ENCODE measurements at regions of chr17 and their contacts with region 1.

Region 1: DNA sequence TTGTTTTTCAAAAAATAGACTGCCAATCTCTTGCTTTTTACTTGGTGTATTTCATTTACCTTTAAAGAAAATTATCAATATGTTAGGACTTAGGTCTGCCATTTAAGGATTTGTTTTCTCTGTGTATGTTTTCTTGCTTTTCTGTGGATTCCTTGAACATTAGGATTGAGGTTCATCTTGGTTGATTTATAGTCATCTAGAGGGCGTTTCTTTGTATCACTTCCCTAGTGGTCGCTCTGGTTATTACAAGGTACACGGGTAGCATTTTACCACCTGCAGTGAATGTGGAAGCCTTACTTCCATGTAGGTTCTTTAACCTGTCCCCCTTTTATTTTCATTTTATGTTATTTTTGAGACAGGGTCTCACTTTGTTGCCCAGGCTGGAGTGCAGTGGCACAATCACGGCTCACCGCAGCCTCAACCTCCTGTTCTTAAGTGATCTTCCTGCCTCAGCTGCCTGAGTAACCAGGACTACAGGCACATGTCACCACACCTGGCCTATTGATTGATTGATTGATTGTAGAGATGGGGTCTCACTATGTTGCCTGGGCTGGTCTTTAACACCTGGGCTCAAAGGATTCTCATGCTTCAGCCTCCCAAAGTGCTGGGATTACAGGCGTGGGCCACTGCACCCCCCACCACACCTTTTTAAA is 35.2 kb upstream of the CBX4 start:
- DNase-seq: peak in 1 of 2 experiments; percentile 59
- H3K4me3 ChIP-seq: no peak overlapping the region
- H3K4me3 Mint-ChIP-seq: no peak overlapping the region
- H3K27ac Mint-ChIP-seq: no peak overlapping the region
- H3K4me1 ChIP-seq: no peaks in the 10 kb centered on the region
- H3K4me1 Mint-ChIP-seq: no peaks in the 10 kb centered on the region
- H3K27me3 ChIP-seq: no peaks in the 10 kb centered on the region
- H3K27me3 Mint-ChIP-seq: no peaks in the 10 kb centered on the region
- CTCF ChIP-seq: peak; percentile 47 to 57

Region 2: DNA sequence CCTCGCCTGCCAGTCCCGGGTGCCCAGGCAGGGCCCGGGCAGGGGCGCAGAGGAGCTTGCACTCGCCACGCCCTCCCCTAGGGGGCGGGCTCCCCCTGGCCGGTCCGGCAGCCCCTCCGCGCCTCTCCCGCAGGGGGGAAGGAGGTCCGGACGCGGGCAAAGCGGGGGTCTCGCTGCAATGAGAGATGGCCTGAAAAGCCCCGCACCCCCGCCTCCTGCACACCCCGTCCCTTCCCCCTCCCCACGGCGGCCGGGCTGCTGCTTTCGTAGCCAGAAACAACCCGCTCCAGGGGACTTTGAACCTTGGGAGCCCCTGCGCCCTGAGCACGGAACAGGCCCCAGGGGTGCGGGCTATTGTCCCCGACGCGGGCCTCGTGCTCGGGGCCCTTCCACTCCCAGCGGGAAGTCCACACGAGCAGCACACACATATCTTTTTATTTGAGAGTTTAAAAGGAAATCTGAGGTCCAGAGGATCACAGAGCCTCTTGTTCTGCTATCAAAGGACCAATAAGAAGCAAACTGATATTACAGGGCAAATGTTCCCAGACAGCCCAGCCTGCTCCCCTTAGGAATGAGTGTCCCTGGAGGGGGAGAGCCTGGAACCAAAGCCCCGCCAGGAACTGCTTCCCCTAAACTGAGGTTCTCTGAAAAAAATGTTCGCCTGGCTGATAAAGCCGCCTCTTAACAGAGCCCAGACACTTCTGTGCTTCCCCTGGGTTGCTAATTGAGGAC is 29.4 kb before region 1 on chr17:
- CTCF ChIA-PET with region 1: interaction called, 3 read pairs
- POLR2A ChIA-PET with region 1: no interaction called
- intact Hi-C with region 1: loop called (anchors 2 kb)
- DNase-seq: peak; percentile 82 to 87
- H3K4me3 ChIP-seq: peak overlapping the region; percentile 68
- H3K4me3 Mint-ChIP-seq: peak overlapping the region; percentile 80
- H3K27ac Mint-ChIP-seq: peak overlapping the region; percentile 92
- H3K4me1 ChIP-seq: peaks cover 41% of the 10 kb centered on the region
- H3K4me1 Mint-ChIP-seq: peaks cover 12% of the 10 kb centered on the region
- H3K27me3 ChIP-seq: no peaks in the 10 kb centered on the region
- H3K27me3 Mint-ChIP-seq: no peaks in the 10 kb centered on the region
- CTCF ChIP-seq: peak; percentile 89

Region 3: GRCh38 chr17:79905832-79906231 is 31.4 kb after region 1 on chr17:
- CTCF ChIA-PET with region 1: interaction called, 14 read pairs
- POLR2A ChIA-PET with region 1: no interaction called
- intact Hi-C with region 1: no loop called
- DNase-seq: peak; percentile 83 to 86
- H3K4me3 ChIP-seq: no peak overlapping the region
- H3K4me3 Mint-ChIP-seq: no peak overlapping the region
- H3K27ac Mint-ChIP-seq: no peak overlapping the region
- H3K4me1 ChIP-seq: peaks cover 13% of the 10 kb centered on the region; the same call in 1 of the 2 replicates
- H3K4me1 Mint-ChIP-seq: peaks cover 19% of the 10 kb centered on the region
- H3K27me3 ChIP-seq: no peaks in the 10 kb centered on the region
- H3K27me3 Mint-ChIP-seq: no peaks in the 10 kb centered on the region
- CTCF ChIP-seq: peak; percentile 69 to 83